B cell (primary cell): ENCODE measurements at regions of chr22 and their contacts with region 1.

Region 1: GRCh38 chr22:22959147-22959827 is 71.7 kb downstream of the IGLL5 start:
- DNase-seq: peak; percentile 90
- ATAC-seq: peak; percentile 52
- H3K4me3 ChIP-seq: no peak overlapping the region
- H3K4me3 Mint-ChIP-seq: no peak overlapping the region
- H3K27ac ChIP-seq: no peak overlapping the region
- H3K27ac Mint-ChIP-seq: peak overlapping the region; percentile 43
- H3K4me1 ChIP-seq: peaks cover 11 to 18% of the 10 kb centered on the region in 2 donors
- H3K4me1 Mint-ChIP-seq: peaks cover 15% of the 10 kb centered on the region
- H3K27me3 ChIP-seq: no peaks in the 10 kb centered on the region
- H3K27me3 Mint-ChIP-seq: no peaks in the 10 kb centered on the region
- CTCF ChIP-seq: peak; percentile 95

Region 2: DNA sequence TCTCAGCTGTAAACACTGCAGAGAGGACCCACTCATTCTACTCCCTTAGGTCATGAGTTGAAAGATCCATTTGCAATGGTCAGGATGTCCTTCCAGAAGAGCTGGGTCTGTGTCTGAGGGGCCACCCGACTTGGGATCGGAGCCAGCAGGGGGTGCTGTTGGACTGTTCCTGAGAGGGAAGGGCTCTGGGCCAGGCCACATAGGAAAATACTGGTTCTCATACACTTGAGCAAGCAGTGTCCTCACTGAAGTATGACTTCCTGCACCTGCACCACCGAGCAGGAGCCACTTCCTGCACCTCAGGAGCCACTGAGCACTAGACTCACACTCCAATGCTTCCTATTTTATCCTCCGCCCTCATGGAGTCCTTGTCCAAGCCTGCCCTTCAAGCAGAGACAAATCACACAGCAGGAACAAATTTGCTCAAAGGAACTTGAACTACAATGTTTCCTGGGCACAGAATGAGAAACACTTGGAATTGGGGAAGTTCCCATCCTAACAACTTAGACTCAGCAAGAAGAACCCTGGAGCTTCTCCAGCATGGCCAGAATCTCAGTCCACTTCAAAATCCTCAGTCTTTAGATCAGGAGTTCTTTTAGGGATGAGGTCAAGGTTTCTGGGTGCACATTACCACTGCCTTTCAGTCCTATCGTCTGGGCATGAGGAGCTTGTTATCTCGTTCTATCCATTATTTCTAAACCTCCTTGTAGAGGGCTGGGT is 751.3 kb before region 1 on chr22:
- CTCF ChIA-PET with region 1: interaction called, 16 read pairs
- POLR2A ChIA-PET with region 1: no interaction called
- intact Hi-C with region 1: loop called (anchors 5 kb)
- DNase-seq: peak; percentile 90
- ATAC-seq: peak; percentile 85
- H3K4me3 ChIP-seq: peak overlapping the region in 1 of 5 experiments; percentile 12
- H3K4me3 Mint-ChIP-seq: peak overlapping the region; percentile 67
- H3K27ac ChIP-seq: peak overlapping the region; percentile 45 to 51
- H3K27ac Mint-ChIP-seq: peak overlapping the region; percentile 93
- H3K4me1 ChIP-seq: peaks cover 53 to 57% of the 10 kb centered on the region in 2 donors
- H3K4me1 Mint-ChIP-seq: peaks cover 54% of the 10 kb centered on the region
- H3K27me3 ChIP-seq: no peaks in the 10 kb centered on the region
- H3K27me3 Mint-ChIP-seq: no peaks in the 10 kb centered on the region
- CTCF ChIP-seq: peak; percentile 89

Region 3: GRCh38 chr22:22593964-22594656 is 365.2 kb before region 1 on chr22:
- CTCF ChIA-PET with region 1: interaction called, 31 read pairs
- POLR2A ChIA-PET with region 1: no interaction called
- intact Hi-C with region 1: loop called (anchors 1 kb)
- DNase-seq: peak; percentile 80
- ATAC-seq: peak; percentile 74
- H3K4me3 ChIP-seq: no peak overlapping the region
- H3K4me3 Mint-ChIP-seq: no peak overlapping the region
- H3K27ac ChIP-seq: no peak overlapping the region
- H3K27ac Mint-ChIP-seq: peak overlapping the region; percentile 82
- H3K4me1 ChIP-seq: peaks cover 10 to 11% of the 10 kb centered on the region in 2 donors
- H3K4me1 Mint-ChIP-seq: peaks cover 26% of the 10 kb centered on the region
- H3K27me3 ChIP-seq: no peaks in the 10 kb centered on the region
- H3K27me3 Mint-ChIP-seq: no peaks in the 10 kb centered on the region
- CTCF ChIP-seq: peak; percentile 81

Region 4: DNA sequence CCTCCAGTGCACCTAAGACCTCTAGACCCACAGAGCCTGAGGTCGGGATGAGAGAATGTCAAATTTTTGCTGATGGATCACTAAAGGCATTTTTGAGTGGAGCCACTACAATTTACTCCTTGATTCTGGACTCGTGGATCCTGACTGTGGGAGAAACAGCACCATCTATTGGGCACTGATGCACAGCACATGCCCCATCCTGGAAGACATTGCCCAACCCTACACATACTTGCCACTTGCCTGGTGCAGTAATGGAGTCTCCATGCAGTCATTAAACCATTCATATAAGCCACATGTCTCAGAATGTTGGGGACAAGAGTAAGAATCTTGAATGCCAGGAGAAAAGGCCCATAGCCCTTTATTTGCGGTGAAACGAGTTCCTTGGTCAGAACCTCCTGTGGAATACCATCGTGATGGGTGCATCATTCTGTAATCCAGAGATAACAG is 211.0 kb before region 1 on chr22:
- CTCF ChIA-PET with region 1: interaction called, 91 read pairs
- POLR2A ChIA-PET with region 1: no interaction called
- intact Hi-C with region 1: loop called (anchors 1 kb)
- DNase-seq: peak; percentile 67
- ATAC-seq: peak; percentile 26
- H3K4me3 ChIP-seq: no peak overlapping the region
- H3K4me3 Mint-ChIP-seq: peak overlapping the region; percentile 26
- H3K27ac ChIP-seq: no peak overlapping the region
- H3K27ac Mint-ChIP-seq: peak overlapping the region; percentile 13
- H3K4me1 ChIP-seq: peaks cover 40 to 47% of the 10 kb centered on the region in 2 donors
- H3K4me1 Mint-ChIP-seq: peaks cover 51% of the 10 kb centered on the region
- H3K27me3 ChIP-seq: no peaks in the 10 kb centered on the region
- H3K27me3 Mint-ChIP-seq: no peaks in the 10 kb centered on the region
- CTCF ChIP-seq: no peak

Region 5: GRCh38 chr22:22848364-22848866 is 110.9 kb before region 1 on chr22:
- CTCF ChIA-PET with region 1: interaction called, 412 read pairs
- POLR2A ChIA-PET with region 1: no interaction called
- intact Hi-C with region 1: loop called (anchors 1 kb)
- DNase-seq: peak; percentile 83
- ATAC-seq: peak; percentile 77
- H3K4me3 ChIP-seq: no peak overlapping the region
- H3K4me3 Mint-ChIP-seq: no peak overlapping the region
- H3K27ac ChIP-seq: no peak overlapping the region
- H3K27ac Mint-ChIP-seq: peak overlapping the region; percentile 32
- H3K4me1 ChIP-seq: peaks cover 28 to 29% of the 10 kb centered on the region in 2 donors
- H3K4me1 Mint-ChIP-seq: peaks cover 29% of the 10 kb centered on the region
- H3K27me3 ChIP-seq: peaks cover 0 to 3% (median 0%) of the 10 kb centered on the region in 4 experiments
- H3K27me3 Mint-ChIP-seq: peaks cover 16% of the 10 kb centered on the region
- CTCF ChIP-seq: peak; percentile 87

Region 6: GRCh38 chr22:22976033-22976922 is 17.0 kb after region 1 on chr22:
- CTCF ChIA-PET with region 1: interaction called, 22 read pairs
- POLR2A ChIA-PET with region 1: no interaction called
- intact Hi-C with region 1: no loop called
- DNase-seq: no peak
- ATAC-seq: no peak
- H3K4me3 ChIP-seq: no peak overlapping the region
- H3K4me3 Mint-ChIP-seq: no peak overlapping the region
- H3K27ac ChIP-seq: no peak overlapping the region
- H3K27ac Mint-ChIP-seq: no peak overlapping the region
- H3K4me1 ChIP-seq: no peaks in the 10 kb centered on the region
- H3K4me1 Mint-ChIP-seq: no peaks in the 10 kb centered on the region
- H3K27me3 ChIP-seq: no peaks in the 10 kb centered on the region
- H3K27me3 Mint-ChIP-seq: peaks cover 23% of the 10 kb centered on the region
- CTCF ChIP-seq: no peak

Region 7: GRCh38 chr22:22995166-22995565 is 35.9 kb after region 1 on chr22:
- CTCF ChIA-PET with region 1: no interaction called
- POLR2A ChIA-PET with region 1: no interaction called
- intact Hi-C with region 1: no loop called
- DNase-seq: no peak
- ATAC-seq: no peak
- H3K4me3 ChIP-seq: no peak overlapping the region
- H3K4me3 Mint-ChIP-seq: no peak overlapping the region
- H3K27ac ChIP-seq: no peak overlapping the region
- H3K27ac Mint-ChIP-seq: no peak overlapping the region
- H3K4me1 ChIP-seq: peaks cover 0 to 2% of the 10 kb centered on the region in 2 donors
- H3K4me1 Mint-ChIP-seq: peaks cover 4% of the 10 kb centered on the region
- H3K27me3 ChIP-seq: no peaks in the 10 kb centered on the region
- H3K27me3 Mint-ChIP-seq: peaks cover 9% of the 10 kb centered on the region
- CTCF ChIP-seq: no peak

Region 8: GRCh38 chr22:23054531-23055257 is 95.4 kb after region 1 on chr22:
- CTCF ChIA-PET with region 1: no interaction called
- POLR2A ChIA-PET with region 1: no interaction called
- intact Hi-C with region 1: no loop called
- DNase-seq: no peak
- ATAC-seq: peak; percentile 83
- H3K4me3 ChIP-seq: no peak overlapping the region
- H3K4me3 Mint-ChIP-seq: peak overlapping the region; percentile 64
- H3K27ac ChIP-seq: no peak overlapping the region
- H3K27ac Mint-ChIP-seq: peak overlapping the region; percentile 90
- H3K4me1 ChIP-seq: peaks cover 16 to 27% of the 10 kb centered on the region in 2 donors
- H3K4me1 Mint-ChIP-seq: peaks cover 36% of the 10 kb centered on the region
- H3K27me3 ChIP-seq: no peaks in the 10 kb centered on the region
- H3K27me3 Mint-ChIP-seq: no peaks in the 10 kb centered on the region
- CTCF ChIP-seq: no peak

Region 9: GRCh38 chr22:23192181-23192957 is 233.1 kb after region 1 on chr22:
- CTCF ChIA-PET with region 1: no interaction called
- POLR2A ChIA-PET with region 1: no interaction called
- intact Hi-C with region 1: no loop called
- DNase-seq: no peak
- ATAC-seq: no peak
- H3K4me3 ChIP-seq: no peak overlapping the region
- H3K4me3 Mint-ChIP-seq: no peak overlapping the region
- H3K27ac ChIP-seq: no peak overlapping the region
- H3K27ac Mint-ChIP-seq: no peak overlapping the region
- H3K4me1 ChIP-seq: peaks cover 0 to 6% of the 10 kb centered on the region in 2 donors
- H3K4me1 Mint-ChIP-seq: peaks cover 1% of the 10 kb centered on the region
- H3K27me3 ChIP-seq: no peaks in the 10 kb centered on the region
- H3K27me3 Mint-ChIP-seq: no peaks in the 10 kb centered on the region
- CTCF ChIP-seq: no peak

Region 10: GRCh38 chr22:23289851-23290724 is 330.8 kb after region 1 on chr22:
- CTCF ChIA-PET with region 1: interaction called, 28 read pairs
- POLR2A ChIA-PET with region 1: no interaction called
- intact Hi-C with region 1: no loop called
- DNase-seq: peak; percentile 69
- ATAC-seq: peak; percentile 53
- H3K4me3 ChIP-seq: no peak overlapping the region
- H3K4me3 Mint-ChIP-seq: no peak overlapping the region
- H3K27ac ChIP-seq: no peak overlapping the region
- H3K27ac Mint-ChIP-seq: no peak overlapping the region
- H3K4me1 ChIP-seq: no peaks in the 10 kb centered on the region
- H3K4me1 Mint-ChIP-seq: no peaks in the 10 kb centered on the region
- H3K27me3 ChIP-seq: no peaks in the 10 kb centered on the region
- H3K27me3 Mint-ChIP-seq: no peaks in the 10 kb centered on the region
- CTCF ChIP-seq: peak; percentile 75